CD4-positive, alpha-beta memory T cell (primary cell): ENCODE measurements at regions of chr5 and their contacts with region 1.

Region 1: DNA sequence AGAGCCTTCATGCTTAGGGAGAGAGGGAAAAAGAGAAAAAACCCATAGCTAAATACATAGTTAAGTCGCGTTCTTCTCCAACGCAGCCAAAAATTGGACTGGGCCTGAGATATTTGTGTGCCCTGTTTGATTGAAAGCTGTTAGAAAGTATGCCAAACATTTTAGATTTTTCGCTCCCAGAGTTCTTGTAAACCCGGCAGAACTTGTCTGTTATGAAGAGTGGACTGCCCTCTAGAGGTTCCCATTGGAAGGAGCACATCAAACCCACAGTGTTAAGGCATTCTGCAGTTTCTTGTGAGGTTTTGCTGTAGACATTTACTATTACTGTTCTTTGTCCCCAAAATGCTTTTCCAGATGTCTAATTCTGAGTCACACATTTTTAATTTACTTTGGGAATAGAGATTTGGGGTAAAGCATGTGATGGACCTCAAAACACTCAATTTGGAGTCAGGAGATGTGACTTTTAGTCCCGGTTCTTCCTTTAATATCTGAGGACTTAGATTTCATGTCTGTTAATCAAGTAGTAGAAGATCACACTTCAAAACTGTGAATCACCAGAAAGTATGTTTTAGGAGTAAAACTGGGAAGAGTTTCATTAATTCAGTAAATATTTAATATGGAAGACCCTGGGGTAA is 96.6 kb downstream of the PCSK1 start:
- DNase-seq: peak; percentile 61 to 70 (median 66)
- H3K4me3 ChIP-seq: no peak overlapping the region
- H3K4me3 Mint-ChIP-seq: no peak overlapping the region
- H3K27ac ChIP-seq: no peak overlapping the region
- H3K27ac Mint-ChIP-seq: no peak overlapping the region
- H3K4me1 ChIP-seq: no peaks in the 10 kb centered on the region
- H3K4me1 Mint-ChIP-seq: no peaks in the 10 kb centered on the region
- H3K27me3 ChIP-seq: peaks cover 7% of the 10 kb centered on the region
- H3K27me3 Mint-ChIP-seq: peaks cover 9% of the 10 kb centered on the region in 2 donors

Region 2: DNA sequence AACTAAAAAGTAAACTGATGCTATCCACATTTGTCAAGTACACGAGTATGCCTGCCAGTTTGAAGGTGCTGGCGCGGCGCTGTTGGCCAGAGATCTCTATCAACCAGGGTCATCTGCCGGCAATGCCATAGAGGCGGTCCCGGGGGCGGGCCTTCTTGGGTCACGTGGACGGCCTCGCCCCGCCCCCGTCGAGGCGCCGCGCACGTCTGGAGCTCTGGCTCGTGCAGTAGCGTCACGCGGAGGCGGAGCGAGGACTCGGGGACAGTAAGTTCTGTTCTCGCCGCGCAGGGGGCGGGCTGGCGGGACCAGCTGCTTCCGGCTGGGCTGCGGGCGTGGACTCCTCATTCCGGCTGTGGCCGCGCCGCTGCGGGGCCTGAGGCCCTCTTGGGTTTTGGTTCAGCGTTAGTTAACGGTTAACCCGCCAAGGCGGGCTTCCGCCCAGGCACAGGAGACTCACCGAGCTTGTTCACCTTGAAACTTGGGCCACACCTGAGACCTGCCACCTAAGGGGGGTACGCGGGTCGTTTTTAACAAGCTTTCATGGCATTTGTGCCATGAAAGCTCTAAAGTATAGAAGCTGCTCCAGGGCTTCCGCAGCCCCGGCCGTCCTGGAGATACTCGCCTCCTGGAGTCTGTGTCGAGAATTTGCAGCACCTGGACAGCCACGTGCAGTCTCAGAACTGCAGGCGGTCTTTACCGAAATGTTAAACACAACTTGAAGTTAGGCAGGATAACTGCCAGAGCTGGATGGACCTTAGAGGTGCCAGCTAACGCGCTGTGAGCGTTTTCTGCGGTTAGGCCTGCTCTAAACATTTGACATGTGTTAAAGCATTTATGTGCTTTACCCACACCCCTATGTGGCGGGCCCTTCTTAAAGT is 689.7 kb before region 1 on chr5 and contains the start of gene RFESD:
- CTCF ChIA-PET with region 1: no interaction called
- POLR2A ChIA-PET with region 1: no interaction called
- intact Hi-C with region 1: loop called (anchors 5 kb)
- DNase-seq: peak; percentile 91 to 95 (median 92)
- H3K4me3 ChIP-seq: peak within 1 kb of the TSS; percentile 71 to 94
- H3K4me3 Mint-ChIP-seq: peak within 1 kb of the TSS; percentile 87 to 93 (median 89)
- H3K27ac ChIP-seq: peak within 1 kb of the TSS; percentile 84
- H3K27ac Mint-ChIP-seq: peak within 1 kb of the TSS; percentile 57 to 94 (median 93)
- H3K4me1 ChIP-seq: peaks cover 31% of the 10 kb centered on the region
- H3K4me1 Mint-ChIP-seq: peaks cover 20 to 42% (median 26%) of the 10 kb centered on the region in 4 donors
- H3K27me3 ChIP-seq: no peaks in the 10 kb centered on the region
- H3K27me3 Mint-ChIP-seq: no peaks in the 10 kb centered on the region
- total RNA-seq, gene RFESD: 9.1 to 9.3 TPM

Region 3: DNA sequence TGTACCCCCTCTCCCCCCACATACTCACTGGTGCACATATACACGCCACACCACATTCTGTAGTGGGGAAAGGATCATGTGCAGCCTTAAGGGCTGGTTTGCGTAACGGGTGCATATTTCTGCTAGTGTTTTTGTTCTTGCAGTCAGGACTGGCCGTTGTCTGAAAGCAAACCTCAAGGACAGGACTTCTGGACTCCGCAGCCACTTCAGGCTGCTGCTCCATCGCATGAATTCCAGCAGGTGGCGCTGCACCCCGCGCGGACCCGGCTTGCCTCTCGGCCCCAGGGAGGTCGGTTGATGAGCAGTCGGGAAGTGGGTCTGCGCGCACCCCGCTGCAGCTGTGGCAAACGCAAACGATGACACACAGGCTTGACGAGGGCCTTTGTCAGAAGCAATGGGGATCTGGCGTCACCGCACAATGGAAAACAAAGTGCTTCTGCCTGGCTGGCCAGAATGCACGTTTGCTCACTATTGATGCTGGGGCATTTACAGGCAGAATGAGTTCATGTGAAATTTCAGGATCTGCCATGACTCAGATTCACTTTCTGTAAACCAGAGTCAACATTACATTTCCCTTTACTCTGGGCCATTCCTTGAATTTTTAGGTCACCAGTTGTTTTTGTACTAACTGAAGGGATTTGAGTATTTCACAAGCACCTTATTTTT is 477.7 kb before region 1 on chr5:
- CTCF ChIA-PET with region 1: interaction called, 362 read pairs
- POLR2A ChIA-PET with region 1: interaction called, 8 read pairs
- intact Hi-C with region 1: loop called (anchors 1 kb)
- DNase-seq: peak; percentile 83 to 94 (median 84)
- H3K4me3 ChIP-seq: peak overlapping the region in 1 of 2 donors; percentile 7
- H3K4me3 Mint-ChIP-seq: peak overlapping the region; percentile 32 to 75 (median 54)
- H3K27ac ChIP-seq: no peak overlapping the region
- H3K27ac Mint-ChIP-seq: peak overlapping the region in 6 of 7 donors; percentile 21 to 86 (median 65)
- H3K4me1 ChIP-seq: peaks cover 13% of the 10 kb centered on the region
- H3K4me1 Mint-ChIP-seq: peaks cover 13 to 34% (median 25%) of the 10 kb centered on the region in 4 donors
- H3K27me3 ChIP-seq: no peaks in the 10 kb centered on the region
- H3K27me3 Mint-ChIP-seq: peaks cover 0 to 4% of the 10 kb centered on the region in 2 donors

Region 4: DNA sequence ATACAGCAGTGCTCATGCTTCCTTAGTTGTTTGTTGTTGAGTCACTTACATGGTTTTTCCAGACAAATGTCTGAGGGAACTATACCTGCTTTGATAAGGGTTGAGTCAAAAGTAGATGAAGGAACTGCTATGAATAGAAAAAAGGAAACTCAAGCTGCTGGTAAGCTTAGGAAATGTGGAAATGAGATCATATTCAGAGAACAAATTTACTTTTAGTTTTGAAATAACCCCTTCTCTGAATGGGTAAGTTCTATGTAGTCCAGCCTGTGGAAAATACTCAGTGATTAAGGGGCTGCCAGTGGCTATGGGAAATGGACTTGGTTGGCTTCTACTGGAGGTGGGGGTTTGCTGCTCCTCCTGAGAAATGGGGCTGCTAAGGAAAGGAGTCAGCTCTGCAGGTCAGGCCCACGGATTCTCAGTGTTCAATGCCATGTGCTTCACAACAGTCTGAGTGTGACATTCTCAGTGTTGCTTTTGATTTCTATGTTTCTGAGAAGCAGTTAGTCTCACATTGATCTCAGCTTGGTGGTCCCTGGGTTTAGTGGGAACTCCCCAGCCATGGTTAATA is 466.3 kb before region 1 on chr5:
- CTCF ChIA-PET with region 1: interaction called, 19 read pairs
- POLR2A ChIA-PET with region 1: no interaction called
- intact Hi-C with region 1: no loop called
- DNase-seq: no peak
- H3K4me3 ChIP-seq: no peak overlapping the region
- H3K4me3 Mint-ChIP-seq: peak overlapping the region in 7 of 8 donors; percentile 13 to 61 (median 53)
- H3K27ac ChIP-seq: no peak overlapping the region
- H3K27ac Mint-ChIP-seq: peak overlapping the region; percentile 41 to 81 (median 65)
- H3K4me1 ChIP-seq: peaks cover 34% of the 10 kb centered on the region
- H3K4me1 Mint-ChIP-seq: peaks cover 24 to 47% (median 33%) of the 10 kb centered on the region in 4 donors
- H3K27me3 ChIP-seq: no peaks in the 10 kb centered on the region
- H3K27me3 Mint-ChIP-seq: no peaks in the 10 kb centered on the region

Region 5: GRCh38 chr5:96324708-96325107 is 11.8 kb before region 1 on chr5:
- CTCF ChIA-PET with region 1: interaction called, 29 read pairs
- POLR2A ChIA-PET with region 1: no interaction called
- intact Hi-C with region 1: no loop called
- DNase-seq: no peak
- H3K4me3 ChIP-seq: no peak overlapping the region
- H3K4me3 Mint-ChIP-seq: no peak overlapping the region
- H3K27ac ChIP-seq: no peak overlapping the region
- H3K27ac Mint-ChIP-seq: no peak overlapping the region
- H3K4me1 ChIP-seq: no peaks in the 10 kb centered on the region
- H3K4me1 Mint-ChIP-seq: no peaks in the 10 kb centered on the region
- H3K27me3 ChIP-seq: no peaks in the 10 kb centered on the region
- H3K27me3 Mint-ChIP-seq: peaks cover 1 to 5% of the 10 kb centered on the region in 2 donors

Region 6: DNA sequence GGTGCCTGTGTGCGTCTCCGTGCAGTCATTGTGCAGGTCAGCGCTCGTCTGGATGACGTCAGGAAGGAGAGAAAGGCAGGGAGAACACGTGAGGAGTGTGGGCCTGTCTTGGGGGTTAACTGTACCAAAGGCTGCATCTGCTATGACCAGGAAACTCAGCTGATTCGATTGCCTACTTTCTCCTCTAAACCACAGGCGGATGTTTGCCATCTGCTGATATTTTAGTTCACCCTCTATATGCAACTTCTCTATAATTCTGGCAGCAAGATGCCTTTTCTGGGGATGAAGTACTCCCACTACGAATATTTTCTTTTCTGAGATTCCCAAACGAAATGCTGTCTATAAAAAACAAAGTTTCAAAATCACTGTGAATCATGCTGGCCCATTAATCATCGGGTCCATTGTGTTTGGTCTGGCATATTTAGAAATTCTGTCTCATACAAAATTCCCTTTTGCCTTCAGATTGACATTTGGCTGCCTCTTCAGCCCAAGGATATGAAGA is 71.9 kb after region 1 on chr5:
- CTCF ChIA-PET with region 1: no interaction called
- POLR2A ChIA-PET with region 1: no interaction called
- intact Hi-C with region 1: no loop called
- DNase-seq: no peak
- H3K4me3 ChIP-seq: no peak overlapping the region
- H3K4me3 Mint-ChIP-seq: no peak overlapping the region
- H3K27ac ChIP-seq: no peak overlapping the region
- H3K27ac Mint-ChIP-seq: no peak overlapping the region
- H3K4me1 ChIP-seq: no peaks in the 10 kb centered on the region
- H3K4me1 Mint-ChIP-seq: no peaks in the 10 kb centered on the region
- H3K27me3 ChIP-seq: no peaks in the 10 kb centered on the region
- H3K27me3 Mint-ChIP-seq: peaks cover 0 to 2% of the 10 kb centered on the region in 2 donors